PC-9 (cell line): ENCODE measurements at regions of chr12 and their contacts with region 1.

Region 1: GRCh38 chr12:120257041-120257821 is 8.3 kb downstream of the PXN start:
- DNase-seq: peak in 1 of 2 experiments; percentile 66
- H3K4me3 ChIP-seq: no peak overlapping the region
- H3K27ac ChIP-seq: 0 out of 2 replicates have a peak overlapping the region, but pooled peaks have one; percentile 34
- H3K4me1 ChIP-seq: peaks cover 34% of the 10 kb centered on the region
- H3K27me3 ChIP-seq: no peaks in the 10 kb centered on the region
- CTCF ChIP-seq: no peak

Region 2: GRCh38 chr12:120086801-120087621 is 170.2 kb before region 1 on chr12:
- CTCF ChIA-PET with region 1: no interaction called
- POLR2A ChIA-PET with region 1: no interaction called
- intact Hi-C with region 1: loop called (anchors 1 kb)
- DNase-seq: peak; percentile 91 to 98
- H3K4me3 ChIP-seq: peak overlapping the region; percentile 45; the same call in 1 of the 2 replicates
- H3K27ac ChIP-seq: peak overlapping the region; percentile 76
- H3K4me1 ChIP-seq: peaks cover 22% of the 10 kb centered on the region
- H3K27me3 ChIP-seq: no peaks in the 10 kb centered on the region
- CTCF ChIP-seq: peak; percentile 84

Region 3: DNA sequence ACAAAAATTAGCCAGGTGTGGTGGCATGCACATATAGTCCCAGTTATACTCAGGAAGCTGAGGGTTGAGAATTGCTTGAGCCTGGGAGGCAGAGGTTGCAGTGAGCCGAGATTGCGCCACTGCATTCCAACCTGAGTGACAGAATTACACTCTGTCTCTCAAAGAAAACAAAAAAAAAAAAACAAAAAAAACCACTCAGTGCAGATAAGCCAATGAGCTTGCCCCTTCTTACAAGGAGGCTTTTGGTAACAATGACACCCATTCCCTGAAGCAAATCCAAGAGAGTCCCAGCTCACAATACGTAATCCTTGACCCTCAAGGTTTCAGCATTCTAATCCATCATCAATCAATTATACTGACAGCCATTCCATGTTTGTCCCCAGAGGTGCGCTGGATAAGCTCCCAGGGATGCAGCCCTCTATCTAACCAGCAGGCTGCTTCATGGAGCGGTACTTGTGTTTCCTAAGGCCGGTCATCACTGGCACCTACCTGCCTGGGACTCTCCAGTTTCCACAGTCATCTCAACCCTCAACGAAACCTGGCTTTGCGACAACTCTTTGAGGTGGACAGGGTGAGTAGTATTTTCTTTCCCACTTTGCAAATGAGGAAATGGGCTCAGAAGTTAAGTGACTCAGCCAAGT is 75.1 kb before region 1 on chr12:
- CTCF ChIA-PET with region 1: no interaction called
- POLR2A ChIA-PET with region 1: interaction called, 15 read pairs
- intact Hi-C with region 1: no loop called
- DNase-seq: peak; percentile 61 to 88
- H3K4me3 ChIP-seq: no peak overlapping the region
- H3K27ac ChIP-seq: peak overlapping the region; percentile 84
- H3K4me1 ChIP-seq: peaks cover 27% of the 10 kb centered on the region
- H3K27me3 ChIP-seq: no peaks in the 10 kb centered on the region
- CTCF ChIP-seq: no peak

Region 4: GRCh38 chr12:120228291-120229070 is 28.8 kb before region 1 on chr12:
- CTCF ChIA-PET with region 1: interaction called, 31 read pairs
- POLR2A ChIA-PET with region 1: interaction called, 22 read pairs
- intact Hi-C with region 1: loop called (anchors 1 kb)
- DNase-seq: peak; percentile 80 to 92
- H3K4me3 ChIP-seq: peak overlapping the region; percentile 54; the same call in 1 of the 2 replicates
- H3K27ac ChIP-seq: peak overlapping the region; percentile 99
- H3K4me1 ChIP-seq: peaks cover 53% of the 10 kb centered on the region
- H3K27me3 ChIP-seq: no peaks in the 10 kb centered on the region
- CTCF ChIP-seq: peak; percentile 81

Region 5: DNA sequence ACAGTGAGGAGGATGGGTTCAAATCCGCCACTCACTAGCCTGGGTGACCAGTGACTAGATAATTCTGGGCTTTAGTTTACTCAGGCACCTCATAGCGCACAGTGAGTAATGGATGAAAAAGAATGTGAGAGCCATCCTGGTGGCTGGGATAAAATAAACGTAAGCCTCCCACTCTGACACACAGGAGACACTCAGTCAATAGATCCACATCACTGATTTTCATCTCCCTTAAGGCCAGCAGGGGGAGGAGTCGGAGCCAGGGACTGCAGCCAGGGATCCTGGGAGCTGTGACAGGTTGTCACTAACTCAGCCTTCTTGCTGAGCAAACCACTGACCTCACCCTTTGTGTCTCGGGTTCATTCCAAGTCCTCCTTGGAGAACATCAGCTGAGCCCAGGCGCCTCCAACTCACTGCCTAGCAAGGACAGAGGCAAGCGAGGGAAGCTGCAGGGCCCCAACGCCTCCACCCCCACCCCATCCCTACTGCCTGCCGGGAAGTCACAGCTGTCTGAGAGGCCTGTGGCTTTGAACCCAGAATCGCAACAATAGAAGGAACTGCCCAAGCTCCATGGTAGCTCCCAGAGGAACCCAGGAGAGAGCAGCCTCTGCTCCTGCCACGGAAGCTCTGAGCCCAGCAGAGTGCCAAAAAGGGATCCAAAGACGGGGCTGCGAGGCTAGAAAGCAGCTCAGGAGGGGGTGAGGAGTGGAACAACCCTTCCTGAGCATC is 22.4 kb before region 1 on chr12:
- CTCF ChIA-PET with region 1: interaction called, 31 read pairs
- POLR2A ChIA-PET with region 1: interaction called, 22 read pairs
- intact Hi-C with region 1: loop called (anchors 1 kb)
- DNase-seq: peak; percentile 79
- H3K4me3 ChIP-seq: no peak overlapping the region
- H3K27ac ChIP-seq: peak overlapping the region; percentile 99; the same call in 1 of the 2 replicates
- H3K4me1 ChIP-seq: peaks cover 59% of the 10 kb centered on the region
- H3K27me3 ChIP-seq: no peaks in the 10 kb centered on the region
- CTCF ChIP-seq: peak; percentile 60

Region 6: DNA sequence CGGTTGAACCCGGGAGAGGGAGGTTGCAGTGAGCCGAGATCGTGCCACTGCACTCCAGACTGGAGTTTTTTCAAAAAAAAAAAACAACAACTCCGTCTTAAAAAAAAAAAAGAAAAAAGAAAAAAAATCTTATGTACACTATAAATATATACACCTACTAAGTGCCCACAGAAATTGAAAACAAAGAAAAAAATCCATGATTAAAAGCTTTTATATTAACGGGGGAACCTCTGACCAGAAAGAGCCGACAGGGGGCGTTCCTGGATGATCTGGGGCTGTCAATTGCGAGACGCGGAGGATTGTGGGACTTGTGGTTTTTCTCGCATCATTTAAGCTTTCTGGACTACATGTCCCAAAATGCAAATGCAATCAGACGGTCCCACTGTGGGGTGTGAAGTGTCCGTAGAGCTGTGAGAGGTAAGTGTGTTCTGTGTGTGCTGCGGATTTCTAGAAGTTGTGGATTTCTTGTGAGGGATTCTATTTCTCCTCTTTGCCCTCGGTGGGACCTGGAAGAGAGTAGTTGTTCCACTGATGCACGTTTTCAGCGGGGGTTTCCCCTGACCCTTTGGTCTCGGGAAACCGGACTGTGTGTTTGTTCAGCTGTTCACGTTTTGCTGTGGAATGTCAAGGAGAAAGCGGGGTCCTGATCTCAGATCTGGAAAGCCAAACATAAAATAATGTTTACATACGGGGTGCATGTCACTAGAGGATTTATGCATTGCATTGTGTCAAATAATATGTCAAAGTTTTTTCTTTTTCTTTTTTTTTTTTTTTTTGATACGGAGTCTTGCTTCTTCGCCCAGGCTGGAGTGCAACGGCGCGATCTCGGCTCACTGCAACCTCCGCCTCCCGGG is 45.0 kb after region 1 on chr12 and contains the start of gene SIRT4:
- CTCF ChIA-PET with region 1: no interaction called
- POLR2A ChIA-PET with region 1: no interaction called
- intact Hi-C with region 1: no loop called
- DNase-seq: peak; percentile 78 to 82
- H3K4me3 ChIP-seq: peak within 1 kb of the TSS; percentile 74
- H3K27ac ChIP-seq: no peak within 1 kb of the TSS
- H3K4me1 ChIP-seq: no peaks in the 10 kb centered on the region
- H3K27me3 ChIP-seq: no peaks in the 10 kb centered on the region
- CTCF ChIP-seq: peak; percentile 85
- total RNA-seq, gene SIRT4: 3.2 and 3.6 TPM in 2 replicates

Region 7: DNA sequence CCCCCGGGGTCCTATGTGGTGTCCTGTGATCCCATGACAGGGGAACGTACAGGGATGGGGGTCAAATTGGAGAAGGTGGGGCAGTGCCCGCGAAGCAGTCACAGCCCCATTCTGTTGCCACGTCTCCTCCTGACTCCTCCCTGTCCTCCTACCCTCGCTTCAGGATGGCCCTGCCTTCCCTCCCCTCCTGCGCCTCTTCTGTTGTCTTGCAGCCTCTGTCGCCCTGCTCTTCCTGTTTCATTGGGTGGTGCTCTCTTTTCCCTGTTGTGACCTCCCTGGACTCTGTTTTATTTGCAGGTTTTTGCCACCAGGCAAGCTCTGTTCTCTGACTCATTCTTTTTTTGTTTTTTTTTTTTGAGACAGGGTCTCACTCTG is 401.9 kb after region 1 on chr12:
- CTCF ChIA-PET with region 1: no interaction called
- POLR2A ChIA-PET with region 1: interaction called, 26 read pairs
- intact Hi-C with region 1: no loop called
- DNase-seq: no peak
- H3K4me3 ChIP-seq: no peak overlapping the region
- H3K27ac ChIP-seq: no peak overlapping the region
- H3K4me1 ChIP-seq: no peaks in the 10 kb centered on the region
- H3K27me3 ChIP-seq: peaks cover 16% of the 10 kb centered on the region
- CTCF ChIP-seq: no peak